ENCODE measurements at regions of chr14 and their contacts with region 1.

Region 1: DNA sequence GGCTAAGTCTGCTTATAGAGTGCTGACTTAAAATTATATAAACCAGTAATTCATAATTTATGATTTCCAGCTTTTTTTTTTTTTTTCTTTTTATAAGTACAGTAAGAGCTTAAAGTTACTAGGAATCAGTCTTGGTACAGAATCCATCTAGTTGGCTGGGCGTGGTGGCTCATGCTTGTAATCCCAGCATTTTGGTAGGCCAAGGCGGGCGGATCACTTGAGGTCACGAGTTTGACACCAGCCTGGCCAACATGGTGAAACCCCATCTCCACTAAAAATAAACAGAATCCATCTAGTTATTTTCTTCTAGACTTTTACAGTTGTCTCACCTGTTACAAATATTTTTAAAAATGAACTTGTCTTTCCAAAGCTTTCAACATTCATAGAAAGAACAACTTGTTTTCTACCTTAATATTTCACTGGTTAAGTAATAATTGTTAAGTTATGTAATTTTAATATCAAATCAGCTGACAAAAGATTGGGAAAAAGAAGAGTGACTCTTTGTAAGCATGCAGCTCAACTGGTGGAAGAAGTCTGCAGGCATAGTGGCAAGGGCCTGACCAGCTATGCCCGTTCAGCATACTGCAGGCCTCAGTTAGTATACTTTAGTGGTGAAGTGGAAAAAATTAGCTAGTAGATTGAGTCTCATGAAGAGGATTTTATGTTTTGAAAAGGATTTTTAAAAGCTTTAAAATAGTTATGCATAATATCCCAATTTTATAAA is 17.4 kb upstream of the PSMA3 start:
- DNase-seq: no peak
- H3K4me3 Mint-ChIP-seq: no peak overlapping the region
- H3K27ac Mint-ChIP-seq: no peak overlapping the region
- H3K4me1 Mint-ChIP-seq: no peaks in the 10 kb centered on the region
- H3K27me3 Mint-ChIP-seq: no peaks in the 10 kb centered on the region

Region 2: DNA sequence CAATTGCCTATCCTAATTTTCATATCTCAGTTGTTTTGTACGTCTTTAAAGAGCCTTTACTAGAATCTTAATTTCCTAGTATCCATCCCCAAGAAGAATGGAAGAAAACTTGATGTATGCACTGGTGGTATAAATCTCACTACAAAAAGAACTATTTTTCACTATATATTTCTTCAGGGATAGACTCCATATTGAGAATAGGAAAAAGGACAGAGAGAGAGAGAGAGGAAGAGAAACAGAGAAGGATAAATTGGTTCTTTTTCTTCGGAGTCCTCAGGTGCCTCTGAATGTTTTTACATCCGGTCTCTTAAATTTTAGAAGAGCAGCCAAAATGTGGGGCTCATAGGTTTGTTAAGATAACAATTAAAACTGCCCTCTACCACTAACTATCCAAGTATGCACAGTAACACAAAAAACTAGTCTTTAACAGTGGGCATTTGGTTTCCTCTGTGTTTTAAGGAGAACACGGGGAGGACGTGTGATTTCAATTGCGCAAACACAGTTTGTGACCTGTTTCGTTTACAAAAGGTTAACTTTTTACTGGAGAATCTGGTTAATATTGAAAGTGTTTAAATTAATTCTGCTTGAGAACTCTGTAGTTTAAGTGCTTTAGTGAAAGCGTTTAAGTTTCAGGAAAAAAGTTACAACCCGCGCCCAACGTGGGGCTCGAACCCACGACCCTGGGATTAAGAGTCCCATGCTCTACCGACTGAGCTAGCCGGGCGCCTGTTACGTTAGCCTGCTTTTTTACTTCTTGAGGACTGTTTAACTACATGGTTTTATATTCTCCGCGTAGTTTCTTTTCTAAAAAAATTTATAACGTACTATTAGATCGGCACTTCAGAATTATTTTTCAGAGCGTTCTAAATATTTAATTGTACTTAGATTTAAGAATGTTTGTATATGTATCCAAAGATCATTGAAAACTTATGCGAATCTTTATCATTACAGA is 12.3 kb after region 1 on chr14:
- intact Hi-C with region 1: loop called (anchors 2 kb)
- DNase-seq: peak; percentile 68
- H3K4me3 Mint-ChIP-seq: no peak overlapping the region
- H3K27ac Mint-ChIP-seq: no peak overlapping the region
- H3K4me1 Mint-ChIP-seq: peaks cover 20% of the 10 kb centered on the region
- H3K27me3 Mint-ChIP-seq: no peaks in the 10 kb centered on the region

Region 3: GRCh38 chr14:58315606-58316005 is 88.3 kb after region 1 on chr14:
- intact Hi-C with region 1: no loop called
- DNase-seq: no peak
- H3K4me3 Mint-ChIP-seq: no peak overlapping the region
- H3K27ac Mint-ChIP-seq: no peak overlapping the region
- H3K4me1 Mint-ChIP-seq: no peaks in the 10 kb centered on the region
- H3K27me3 Mint-ChIP-seq: no peaks in the 10 kb centered on the region

Region 4: GRCh38 chr14:58846682-58847465 is 619.6 kb after region 1 on chr14:
- intact Hi-C with region 1: no loop called
- DNase-seq: no peak
- H3K4me3 Mint-ChIP-seq: no peak overlapping the region
- H3K27ac Mint-ChIP-seq: no peak overlapping the region
- H3K4me1 Mint-ChIP-seq: no peaks in the 10 kb centered on the region
- H3K27me3 Mint-ChIP-seq: peaks cover 2% of the 10 kb centered on the region